HEK293T (cell line): ENCODE measurements at regions of chr5 and their contacts with region 1.

Region 1: GRCh38 chr5:88680253-88681132 is 202.5 kb downstream of the MEF2C start:
- DNase-seq: peak; percentile 83

Region 2: DNA sequence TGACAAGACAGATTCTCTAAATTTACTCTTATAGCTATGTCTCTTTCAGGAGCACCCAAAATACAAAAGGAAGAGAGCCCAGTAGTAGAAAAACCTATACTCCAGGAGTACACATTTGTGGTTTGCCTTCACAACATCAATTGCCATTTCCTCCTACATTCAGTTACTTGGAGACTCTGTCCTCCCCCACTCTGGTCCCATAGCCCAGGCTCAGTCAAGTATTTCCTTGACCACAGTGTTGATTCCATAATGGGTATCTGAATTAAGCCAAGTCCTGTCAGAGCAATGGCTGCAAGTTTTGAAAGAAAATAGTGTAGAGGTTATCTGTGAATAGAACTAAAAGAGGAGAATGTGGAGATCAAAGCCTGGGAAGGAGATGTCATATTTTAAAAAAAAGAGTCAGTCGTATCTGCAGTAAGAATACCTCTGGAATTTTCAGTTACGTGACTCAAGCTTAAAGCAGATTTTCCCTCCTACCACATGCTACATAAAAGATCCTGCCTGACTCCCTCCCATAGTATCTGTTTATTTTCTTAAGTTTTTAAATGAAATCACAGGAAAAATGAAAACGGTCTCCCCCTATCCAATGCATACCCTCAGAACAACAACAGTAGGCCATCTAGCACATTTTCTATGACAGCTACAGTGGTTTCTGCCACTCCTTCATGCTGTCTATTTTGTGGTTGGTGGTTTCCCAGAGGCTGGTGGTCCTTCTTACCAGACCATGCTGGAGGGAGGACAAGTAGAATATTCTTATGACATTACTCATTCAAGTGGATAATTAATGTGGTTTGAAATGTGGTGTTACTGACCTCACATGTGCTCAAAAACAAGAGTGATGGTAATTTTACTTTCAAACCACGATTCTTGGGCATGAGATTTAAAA is 162.1 kb before region 1 on chr5:
- CTCF ChIA-PET with region 1: interaction called, 3 read pairs
- POLR2A ChIA-PET with region 1: interaction called, 20 read pairs
- DNase-seq: no peak

Region 3: GRCh38 chr5:88539693-88540365 is 140.7 kb before region 1 on chr5:
- CTCF ChIA-PET with region 1: no interaction called
- POLR2A ChIA-PET with region 1: no interaction called
- DNase-seq: no peak

Region 4: GRCh38 chr5:88660947-88661805 is 19.3 kb before region 1 on chr5:
- CTCF ChIA-PET with region 1: no interaction called
- POLR2A ChIA-PET with region 1: interaction called, 68 read pairs
- DNase-seq: peak; percentile 93

Region 5: DNA sequence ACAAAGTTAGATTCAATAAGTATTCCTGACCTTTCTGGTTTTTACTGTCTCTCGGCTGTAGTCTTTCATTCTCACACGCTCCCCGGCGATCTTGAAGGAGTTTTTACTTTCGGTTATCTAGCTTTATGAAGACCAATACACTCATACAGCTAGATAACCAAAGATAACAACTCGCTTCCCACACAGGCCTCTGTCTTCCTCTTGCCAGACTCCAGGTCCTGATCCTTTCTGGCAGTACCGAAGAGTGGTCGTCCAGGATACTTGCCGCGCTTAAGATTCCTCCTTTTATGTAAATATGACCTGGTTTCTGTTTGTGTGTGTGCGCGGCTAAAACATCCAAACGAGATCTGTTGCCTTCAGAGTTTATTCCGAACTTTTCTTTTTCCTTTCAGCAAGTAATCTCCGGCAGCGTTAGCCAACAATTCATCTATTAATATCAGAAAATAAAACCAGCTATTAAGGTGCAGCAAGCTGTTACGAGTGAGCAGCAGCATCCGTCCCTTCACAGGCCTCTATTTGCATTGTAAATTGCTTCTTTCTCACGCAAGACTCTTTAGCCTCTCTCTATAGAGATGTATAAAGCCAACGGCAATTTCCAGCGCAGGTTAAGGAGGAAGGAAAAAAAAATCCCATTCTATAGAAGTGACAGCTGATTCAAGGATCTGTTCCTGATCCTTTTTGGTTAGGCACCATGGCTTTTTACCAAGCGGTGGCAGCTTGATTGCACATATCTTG is 13.6 kb before region 1 on chr5:
- CTCF ChIA-PET with region 1: no interaction called
- POLR2A ChIA-PET with region 1: interaction called, 68 read pairs
- DNase-seq: no peak

Region 6: DNA sequence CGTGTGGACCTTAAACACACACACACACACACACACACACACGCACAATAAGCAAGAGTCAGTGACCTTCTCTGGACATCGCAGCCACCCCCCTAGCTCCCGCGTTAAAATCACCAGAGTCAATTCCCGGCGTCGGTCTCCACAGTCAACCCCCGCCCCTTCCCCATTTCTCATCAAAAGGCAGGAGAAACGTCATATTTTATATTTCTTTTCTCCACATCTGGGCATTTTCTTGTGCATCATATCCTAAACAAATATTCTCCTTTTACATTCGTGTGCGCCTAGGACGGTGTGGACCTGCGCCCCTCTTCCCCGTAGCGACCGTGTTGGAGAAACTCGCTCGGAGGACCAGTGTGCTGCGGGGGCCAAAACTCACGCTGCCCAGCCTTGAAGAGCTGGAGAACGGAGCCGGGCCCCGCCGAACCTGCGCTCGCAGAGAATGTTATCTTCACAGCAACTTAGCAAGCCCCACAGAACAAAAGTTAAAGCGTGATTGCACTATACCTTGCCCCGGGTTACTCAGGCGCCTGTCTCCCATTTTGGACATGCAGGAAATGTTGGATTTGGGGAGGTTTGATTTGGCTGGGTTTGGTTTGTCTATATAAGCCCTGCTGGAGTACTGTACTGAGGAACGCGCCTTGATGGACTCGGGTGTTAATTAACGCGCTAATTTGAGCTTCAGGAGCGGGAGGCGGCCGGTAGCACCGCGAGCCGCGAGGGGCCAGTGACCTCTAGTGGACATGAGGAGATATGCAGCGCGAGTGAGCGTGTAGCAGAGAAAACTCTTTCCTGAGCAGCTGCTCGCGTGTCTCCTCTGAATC is 10.1 kb after region 1 on chr5:
- CTCF ChIA-PET with region 1: interaction called, 10 read pairs
- POLR2A ChIA-PET with region 1: interaction called, 13 read pairs
- DNase-seq: peak; percentile 75